PC-3 (cell line): ENCODE measurements at regions of chr14 and their contacts with region 1.

Region 1: DNA sequence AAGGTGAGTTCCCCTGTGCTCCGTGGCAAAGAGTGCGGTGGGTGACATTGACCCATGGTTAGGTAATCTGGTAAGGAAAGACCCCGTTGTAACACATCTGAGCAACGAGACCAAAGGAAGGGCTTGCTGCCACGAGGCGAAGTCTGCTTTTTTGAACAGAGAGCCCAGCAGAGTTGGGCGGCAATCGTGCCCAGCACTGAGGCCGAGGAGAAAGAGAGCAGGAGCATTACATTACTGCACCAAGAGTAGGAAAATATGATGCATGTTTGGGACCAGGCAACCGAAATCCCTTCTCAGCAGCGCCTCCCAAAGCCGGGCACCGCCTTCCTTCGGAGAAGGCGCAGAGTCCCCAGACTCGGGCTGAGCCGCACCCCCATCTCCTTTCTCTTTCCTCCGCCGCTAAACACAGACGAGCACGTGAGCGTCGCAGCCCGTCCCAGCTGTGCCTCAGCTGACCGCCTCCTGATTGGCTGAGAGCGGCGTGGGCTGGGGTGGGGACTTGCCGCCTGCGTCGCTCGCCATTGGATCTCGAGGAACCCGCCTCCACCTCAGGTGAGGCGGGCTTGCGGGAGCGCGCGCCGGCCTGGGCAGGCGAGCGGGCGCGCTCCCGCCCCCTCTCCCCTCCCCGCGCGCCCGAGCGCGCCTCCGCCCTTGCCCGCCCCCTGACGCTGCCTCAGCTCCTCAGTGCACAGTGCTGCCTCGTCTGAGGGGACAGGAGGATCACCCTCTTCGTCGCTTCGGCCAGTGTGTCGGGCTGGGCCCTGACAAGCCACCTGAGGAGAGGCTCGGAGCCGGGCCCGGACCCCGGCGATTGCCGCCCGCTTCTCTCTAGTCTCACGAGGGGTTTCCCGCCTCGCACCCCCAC is at the start of gene HIF1A:
- DNase-seq: peak; percentile 100
- ATAC-seq: peak; percentile 90
- H3K4me3 ChIP-seq: peak within 1 kb of the TSS; percentile 86
- H3K27ac ChIP-seq: peak within 1 kb of the TSS; percentile 81
- H3K4me1 ChIP-seq: peaks cover 34% of the 10 kb centered on the region
- H3K27me3 ChIP-seq: no peaks in the 10 kb centered on the region
- CTCF ChIP-seq: peak; percentile 49
- total RNA-seq, gene HIF1A: 266 and 319 TPM in 2 replicates

Region 2: DNA sequence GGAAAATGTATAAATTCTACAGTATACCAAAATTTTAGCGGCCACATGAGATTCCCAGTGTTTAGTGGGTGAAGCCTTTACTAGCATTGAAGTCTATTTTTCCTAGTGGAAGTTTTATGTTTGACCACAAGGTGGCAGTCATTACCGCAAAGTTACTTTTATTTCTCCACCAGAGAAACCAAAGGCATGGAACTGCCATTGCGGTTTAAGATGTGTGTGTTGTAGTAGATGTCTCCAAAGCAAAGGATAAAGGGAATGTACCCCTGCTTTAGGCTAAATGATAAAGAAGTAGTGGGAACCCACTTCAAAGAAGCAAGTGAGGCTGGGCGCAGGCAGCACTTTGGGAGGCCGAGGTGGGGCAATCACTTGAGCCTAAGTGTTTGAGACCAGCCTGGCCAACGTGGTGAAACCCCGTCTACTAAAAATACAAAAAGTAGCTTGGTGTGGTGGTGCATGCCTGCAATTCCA is 233.2 kb before region 1 on chr14:
- CTCF ChIA-PET with region 1: no interaction called
- POLR2A ChIA-PET with region 1: no interaction called
- intact Hi-C with region 1: loop called (anchors 1 kb)
- DNase-seq: peak; percentile 97
- ATAC-seq: peak; percentile 65
- H3K4me3 ChIP-seq: no peak overlapping the region
- H3K27ac ChIP-seq: peak overlapping the region; percentile 76
- H3K4me1 ChIP-seq: peaks cover 46% of the 10 kb centered on the region
- H3K27me3 ChIP-seq: no peaks in the 10 kb centered on the region
- CTCF ChIP-seq: peak; percentile 96

Region 3: DNA sequence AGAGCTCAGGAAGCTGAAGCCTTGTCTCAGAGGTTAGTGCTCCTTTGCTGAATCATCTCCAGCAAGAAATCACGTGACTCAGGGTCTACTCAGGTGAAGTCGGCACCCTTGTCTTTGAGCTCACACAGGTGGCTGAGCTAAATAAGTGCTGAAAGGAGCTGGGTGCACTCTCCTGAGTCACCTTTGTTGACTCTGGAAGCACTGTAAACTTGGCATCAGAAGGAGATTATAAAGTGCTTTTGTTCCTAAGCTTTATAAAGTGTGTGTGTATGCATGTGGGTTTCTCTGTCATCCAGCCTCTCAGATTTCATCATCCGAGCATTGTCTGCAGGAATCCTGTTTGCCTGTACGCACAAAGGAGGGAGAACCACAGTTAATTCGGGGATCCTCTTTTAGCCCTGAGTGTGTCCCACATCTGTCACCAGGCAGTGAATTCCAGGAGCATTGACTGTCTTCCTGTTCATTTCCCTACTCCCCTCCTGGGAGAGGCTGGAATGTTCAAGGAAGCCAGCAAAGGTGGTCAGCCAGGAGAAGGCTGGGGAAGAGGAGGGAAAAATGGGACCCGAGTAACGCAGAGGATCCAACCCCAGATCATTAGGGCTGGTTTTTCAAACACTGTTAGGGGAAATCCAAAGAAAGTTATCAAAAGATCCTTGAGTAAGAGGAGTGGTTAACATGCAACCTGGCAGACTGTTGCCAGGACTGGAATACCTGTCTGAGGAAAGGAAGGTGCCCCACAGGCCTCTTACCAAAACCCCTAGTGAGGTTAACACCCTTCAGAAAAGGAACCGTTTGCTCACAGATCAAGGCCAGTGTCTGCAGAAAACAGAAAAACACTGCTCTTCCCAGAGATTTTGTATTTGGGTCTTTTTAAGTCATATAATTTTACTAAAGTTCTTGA is 157.2 kb before region 1 on chr14:
- CTCF ChIA-PET with region 1: no interaction called
- POLR2A ChIA-PET with region 1: interaction called, 8 read pairs
- intact Hi-C with region 1: loop called (anchors 1 kb)
- DNase-seq: peak; percentile 100
- ATAC-seq: peak; percentile 94
- H3K4me3 ChIP-seq: peak overlapping the region; percentile 8; the same call in 1 of the 2 replicates
- H3K27ac ChIP-seq: peak overlapping the region; percentile 90
- H3K4me1 ChIP-seq: peaks cover 58% of the 10 kb centered on the region
- H3K27me3 ChIP-seq: no peaks in the 10 kb centered on the region
- CTCF ChIP-seq: no peak

Region 4: GRCh38 chr14:61631045-61631687 is 63.9 kb before region 1 on chr14:
- CTCF ChIA-PET with region 1: no interaction called
- POLR2A ChIA-PET with region 1: no interaction called
- intact Hi-C with region 1: loop called (anchors 2 kb)
- DNase-seq: peak; percentile 34
- ATAC-seq: peak; percentile 81
- H3K4me3 ChIP-seq: no peak overlapping the region
- H3K27ac ChIP-seq: peak overlapping the region; percentile 15
- H3K4me1 ChIP-seq: peaks cover 17% of the 10 kb centered on the region
- H3K27me3 ChIP-seq: no peaks in the 10 kb centered on the region
- CTCF ChIP-seq: no peak

Region 5: GRCh38 chr14:61644834-61645233 is 50.2 kb before region 1 on chr14:
- CTCF ChIA-PET with region 1: interaction called, 6 read pairs
- POLR2A ChIA-PET with region 1: interaction called, 16 read pairs
- intact Hi-C with region 1: loop called (anchors 5 kb)
- DNase-seq: peak; percentile 53
- ATAC-seq: peak; percentile 34
- H3K4me3 ChIP-seq: no peak overlapping the region
- H3K27ac ChIP-seq: no peak overlapping the region
- H3K4me1 ChIP-seq: peaks cover 53% of the 10 kb centered on the region
- H3K27me3 ChIP-seq: no peaks in the 10 kb centered on the region
- CTCF ChIP-seq: no peak

Region 6: DNA sequence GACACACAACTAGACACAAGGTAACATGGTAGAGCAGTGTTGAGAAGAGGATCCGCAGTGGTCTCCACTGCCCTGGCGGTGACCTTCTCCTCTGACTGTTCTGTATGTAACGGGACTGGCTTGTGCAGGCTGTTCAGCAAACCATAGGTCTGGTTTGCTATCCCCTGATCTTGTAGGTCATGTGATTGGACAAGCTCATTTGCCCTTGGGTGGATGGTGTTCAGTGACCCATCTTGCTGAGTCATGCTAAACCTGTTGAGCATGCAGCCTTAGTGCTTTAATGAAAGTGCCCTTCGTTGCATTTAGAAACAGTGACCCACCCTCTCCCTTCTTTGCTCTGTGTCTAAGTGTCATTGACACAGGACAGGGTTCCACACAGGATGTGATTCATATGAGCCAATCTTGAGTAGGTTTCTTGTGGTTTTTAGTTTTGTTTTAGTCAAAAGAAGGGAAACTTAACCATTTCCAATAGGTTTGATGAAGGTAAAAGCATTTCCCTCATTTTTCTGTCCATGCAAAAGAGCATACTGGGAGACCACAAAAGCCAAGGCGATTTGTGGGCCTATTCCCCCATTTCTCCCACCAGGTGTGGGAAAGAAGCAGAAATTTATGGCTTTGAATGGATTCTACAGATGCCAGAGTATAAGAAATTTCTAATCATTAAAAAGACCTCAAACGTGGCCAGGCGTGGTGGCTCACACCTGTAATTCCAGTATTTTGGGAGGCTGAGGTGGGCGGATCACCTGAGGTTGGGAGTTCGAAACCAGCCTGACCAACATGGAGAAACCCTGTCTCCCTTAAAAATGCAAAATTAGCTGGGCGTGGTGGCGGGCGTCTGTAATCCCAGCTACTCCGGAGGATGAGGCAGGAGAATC is 32.4 kb before region 1 on chr14:
- CTCF ChIA-PET with region 1: no interaction called
- POLR2A ChIA-PET with region 1: interaction called, 9 read pairs
- intact Hi-C with region 1: loop called (anchors 1 kb)
- DNase-seq: peak; percentile 99
- ATAC-seq: peak; percentile 81
- H3K4me3 ChIP-seq: peak overlapping the region; percentile 34; the same call in 1 of the 2 replicates
- H3K27ac ChIP-seq: peak overlapping the region; percentile 89
- H3K4me1 ChIP-seq: peaks cover 60% of the 10 kb centered on the region
- H3K27me3 ChIP-seq: no peaks in the 10 kb centered on the region
- CTCF ChIP-seq: no peak

Region 7: GRCh38 chr14:61730756-61731373 is 35.8 kb after region 1 on chr14:
- CTCF ChIA-PET with region 1: no interaction called
- POLR2A ChIA-PET with region 1: no interaction called
- intact Hi-C with region 1: loop called (anchors 2 kb)
- DNase-seq: peak; percentile 68
- ATAC-seq: no peak
- H3K4me3 ChIP-seq: no peak overlapping the region
- H3K27ac ChIP-seq: peak overlapping the region; percentile 19
- H3K4me1 ChIP-seq: peaks cover 17% of the 10 kb centered on the region
- H3K27me3 ChIP-seq: no peaks in the 10 kb centered on the region
- CTCF ChIP-seq: peak; percentile 83